PC-3 (cell line): ENCODE measurements at regions of chr3 and their contacts with region 1.

Region 1: DNA sequence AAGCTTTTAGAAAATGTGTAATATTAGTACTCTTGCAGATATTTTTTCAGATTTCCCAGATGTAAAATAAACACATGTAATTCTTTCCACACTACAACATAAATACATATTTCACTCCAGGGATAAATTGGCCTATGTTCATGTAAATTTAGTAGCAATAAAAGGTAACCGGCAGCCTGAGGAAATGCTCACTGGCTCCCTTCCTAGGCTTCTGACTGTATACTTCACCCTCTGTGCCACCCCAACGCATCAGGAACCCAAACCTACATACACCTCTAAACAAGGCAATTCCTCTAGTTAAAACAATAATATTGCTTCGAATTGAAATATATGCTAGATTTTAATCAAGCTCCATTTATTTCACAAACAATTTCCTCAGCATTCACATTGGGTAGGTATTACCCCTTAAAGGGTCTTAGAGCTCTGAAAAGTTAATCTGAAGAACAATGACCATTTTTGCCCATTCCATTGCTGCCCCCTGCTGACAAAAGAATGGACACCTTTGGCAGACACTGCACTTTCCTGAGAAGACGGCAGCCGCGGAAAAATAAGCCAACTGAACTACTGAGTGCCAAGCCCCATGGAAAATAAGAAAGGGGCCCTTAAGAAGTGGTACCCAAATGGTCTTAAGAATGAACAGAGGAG is 212.5 kb downstream of the OSBPL10 start:
- DNase-seq: peak; percentile 65
- ATAC-seq: peak; percentile 58
- H3K4me3 ChIP-seq: no peak overlapping the region
- H3K27ac ChIP-seq: no peak overlapping the region
- H3K4me1 ChIP-seq: no peaks in the 10 kb centered on the region
- H3K27me3 ChIP-seq: no peaks in the 10 kb centered on the region
- CTCF ChIP-seq: peak; percentile 68

Region 2: GRCh38 chr3:31166249-31166885 is 602.2 kb before region 1 on chr3:
- CTCF ChIA-PET with region 1: no interaction called
- POLR2A ChIA-PET with region 1: no interaction called
- intact Hi-C with region 1: loop called (anchors 5 kb)
- DNase-seq: peak; percentile 92
- ATAC-seq: peak; percentile 90
- H3K4me3 ChIP-seq: peak overlapping the region; percentile 19; the same call in 1 of the 2 replicates
- H3K27ac ChIP-seq: peak overlapping the region; percentile 52
- H3K4me1 ChIP-seq: peaks cover 28% of the 10 kb centered on the region
- H3K27me3 ChIP-seq: no peaks in the 10 kb centered on the region
- CTCF ChIP-seq: no peak

Region 3: GRCh38 chr3:31550452-31551251 is 217.9 kb before region 1 on chr3:
- CTCF ChIA-PET with region 1: no interaction called
- POLR2A ChIA-PET with region 1: no interaction called
- intact Hi-C with region 1: loop called (anchors 5 kb)
- DNase-seq: peak; percentile 64
- ATAC-seq: peak; percentile 68
- H3K4me3 ChIP-seq: no peak overlapping the region
- H3K27ac ChIP-seq: no peak overlapping the region
- H3K4me1 ChIP-seq: no peaks in the 10 kb centered on the region; the same call in 1 of the 2 replicates
- H3K27me3 ChIP-seq: no peaks in the 10 kb centered on the region
- CTCF ChIP-seq: peak; percentile 91

Region 4: GRCh38 chr3:31610700-31611275 is 157.8 kb before region 1 on chr3:
- CTCF ChIA-PET with region 1: no interaction called
- POLR2A ChIA-PET with region 1: no interaction called
- intact Hi-C with region 1: loop called (anchors 1 kb)
- DNase-seq: peak; percentile 77
- ATAC-seq: peak; percentile 54
- H3K4me3 ChIP-seq: no peak overlapping the region
- H3K27ac ChIP-seq: no peak overlapping the region
- H3K4me1 ChIP-seq: peaks cover 19% of the 10 kb centered on the region
- H3K27me3 ChIP-seq: no peaks in the 10 kb centered on the region
- CTCF ChIP-seq: peak; percentile 87